Posterior cingulate gyrus (tissue), 11 donors: ENCODE measurements at regions of chr7 and their contacts with region 1.

Region 1: DNA sequence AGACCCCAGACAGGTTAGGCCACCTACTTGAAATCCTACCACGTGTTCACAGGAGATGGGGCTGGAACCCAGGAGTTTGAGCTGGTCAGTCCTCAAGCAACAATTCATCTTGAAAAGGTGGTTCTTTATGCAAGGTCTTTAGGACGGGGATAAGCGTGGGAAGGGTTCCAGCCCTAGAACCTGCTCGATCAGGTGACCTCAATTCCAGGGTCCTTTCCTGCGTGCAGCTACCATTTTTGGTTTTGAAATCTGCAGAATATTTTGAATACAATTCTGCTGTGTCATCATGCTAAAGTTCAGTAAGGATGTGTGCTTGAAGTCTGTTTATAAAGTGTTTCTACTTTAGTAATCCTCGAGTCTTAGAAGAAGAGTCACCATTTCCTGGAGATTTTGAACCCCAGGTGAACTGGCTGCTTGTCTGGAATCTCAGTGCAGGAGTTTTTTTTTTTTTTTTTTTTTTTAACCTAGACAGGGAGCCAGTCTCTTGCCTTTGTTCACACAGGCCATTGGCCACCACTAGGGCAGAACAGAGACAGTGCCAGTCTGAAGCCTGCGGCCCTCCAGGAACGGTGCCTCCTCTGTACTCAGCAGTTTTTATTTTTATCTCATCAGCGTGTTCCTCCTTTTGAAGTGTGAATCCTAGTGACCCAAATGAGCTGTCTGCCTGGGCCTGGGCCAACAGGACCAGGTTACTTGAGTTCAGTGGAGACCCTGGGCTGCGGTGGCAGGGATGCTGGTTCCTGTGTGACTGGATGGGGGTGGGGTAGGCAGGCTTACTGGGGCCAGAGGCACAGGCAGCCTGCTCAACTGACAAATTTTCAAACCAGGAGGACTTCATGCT is 54.6 kb downstream of the EEPD1 start:
- DNase-seq: peak in 7 of 10 donors; percentile 33 to 91 (median 44)

Region 2: GRCh38 chr7:36264123-36264801 is 56.6 kb after region 1 on chr7:
- intact Hi-C with region 1: loop called (anchors 5 kb)
- DNase-seq: no peak

Region 3: GRCh38 chr7:36291387-36292316 is 84.0 kb after region 1 on chr7:
- intact Hi-C with region 1: loop called (anchors 5 kb)
- DNase-seq: peak; percentile 66 to 97 (median 88)